Activated CD4-positive, alpha-beta memory T cell treated with anti-CD3 and anti-CD28 coated beads for 36 hours (primary cell): ENCODE measurements at regions of chr14 and their contacts with region 1.

Region 1: GRCh38 chr14:102819176-102819628 is 42.0 kb downstream of the TRAF3 start:
- DNase-seq: peak; percentile 92
- H3K4me3 Mint-ChIP-seq: peak overlapping the region; percentile 71
- H3K27ac Mint-ChIP-seq: peak overlapping the region; percentile 99
- H3K4me1 Mint-ChIP-seq: peaks cover 87% of the 10 kb centered on the region
- H3K27me3 Mint-ChIP-seq: no peaks in the 10 kb centered on the region

Region 2: DNA sequence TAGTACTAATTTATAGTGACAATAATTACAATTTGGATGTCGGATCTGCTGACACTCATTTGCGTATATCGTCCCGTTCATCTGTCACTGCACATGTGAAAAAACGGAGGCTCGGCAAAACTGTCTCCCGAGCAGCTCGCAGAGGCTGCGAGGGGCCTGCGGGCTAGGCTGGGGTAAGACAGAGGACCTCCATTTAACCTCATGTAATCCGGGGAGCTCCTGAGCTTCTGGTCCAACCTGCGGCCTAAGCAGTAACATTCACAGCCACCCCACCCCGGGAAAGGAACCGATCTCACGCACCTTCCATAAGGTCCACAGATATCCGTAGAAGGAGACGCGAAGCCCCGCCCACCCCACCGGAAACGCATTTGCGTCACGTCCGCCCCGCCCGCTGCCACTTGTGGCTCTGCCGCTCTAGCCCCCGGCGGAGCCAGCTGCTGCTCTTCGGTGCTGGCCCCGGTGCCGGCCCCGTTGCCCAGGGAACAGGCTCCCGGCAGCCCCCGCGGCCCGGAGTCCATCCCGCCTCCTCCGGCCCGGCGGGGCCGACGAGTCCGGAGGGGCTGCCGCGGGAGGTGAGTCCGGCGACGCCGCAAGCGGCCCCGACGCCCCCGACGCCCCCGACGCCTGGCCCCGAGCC is 456.5 kb before region 1 on chr14 and contains the starts of genes CINP and TECPR2:
- CTCF ChIA-PET with region 1: no interaction called
- POLR2A ChIA-PET with region 1: no interaction called
- intact Hi-C with region 1: loop called (anchors 5 kb)
- DNase-seq: peak; percentile 99
- H3K4me3 Mint-ChIP-seq: no peak within 1 kb of the TSS
- H3K27ac Mint-ChIP-seq: peak within 1 kb of the TSS; percentile 96
- H3K4me1 Mint-ChIP-seq: peaks cover 31% of the 10 kb centered on the region
- H3K27me3 Mint-ChIP-seq: no peaks in the 10 kb centered on the region
- total RNA-seq, gene CINP: 50.5 to 51.2 TPM
- total RNA-seq, gene TECPR2: 6.2 to 7.0 TPM

Region 3: DNA sequence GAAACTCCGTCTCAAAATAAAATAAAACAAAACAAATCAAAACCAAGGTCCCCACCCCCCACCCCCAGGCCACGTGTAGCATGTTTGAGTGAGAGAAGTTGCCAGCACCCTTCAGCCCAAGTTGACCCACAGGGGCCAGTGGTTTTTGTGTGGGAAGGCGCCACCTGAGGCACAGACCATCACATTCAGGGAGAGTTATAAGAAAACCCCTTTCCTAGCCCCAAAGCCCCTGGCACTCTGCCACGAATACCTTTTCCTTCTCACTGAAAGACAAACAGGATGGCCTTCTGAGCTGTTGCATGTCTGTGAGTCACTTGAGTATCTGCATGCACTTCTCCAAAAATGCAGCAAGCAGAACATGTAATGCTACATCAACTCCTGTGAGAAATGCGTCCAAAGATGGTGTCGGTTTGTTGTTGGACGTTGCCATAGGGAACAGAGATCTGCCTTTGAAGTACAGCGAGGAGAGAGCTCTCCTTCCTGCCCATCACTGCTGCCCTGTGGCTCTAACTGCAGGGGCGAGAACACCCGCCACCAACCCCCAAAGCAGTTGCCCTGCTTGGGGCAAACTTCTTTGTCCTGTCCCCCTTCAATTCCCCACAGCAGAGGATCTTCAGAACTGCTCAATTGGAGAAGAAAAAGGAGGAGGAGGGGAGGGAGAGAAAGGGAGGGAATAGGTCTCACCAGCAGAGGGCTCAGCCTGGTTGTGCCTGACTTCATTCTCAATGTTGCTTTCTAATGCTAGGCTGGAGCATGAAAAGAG is 44.6 kb before region 1 on chr14:
- CTCF ChIA-PET with region 1: interaction called, 8 read pairs
- POLR2A ChIA-PET with region 1: interaction called, 9 read pairs
- intact Hi-C with region 1: loop called (anchors 1 kb)
- DNase-seq: peak; percentile 74
- H3K4me3 Mint-ChIP-seq: peak overlapping the region; percentile 9
- H3K27ac Mint-ChIP-seq: peak overlapping the region; percentile 86
- H3K4me1 Mint-ChIP-seq: peaks cover 35% of the 10 kb centered on the region
- H3K27me3 Mint-ChIP-seq: no peaks in the 10 kb centered on the region

Region 4: DNA sequence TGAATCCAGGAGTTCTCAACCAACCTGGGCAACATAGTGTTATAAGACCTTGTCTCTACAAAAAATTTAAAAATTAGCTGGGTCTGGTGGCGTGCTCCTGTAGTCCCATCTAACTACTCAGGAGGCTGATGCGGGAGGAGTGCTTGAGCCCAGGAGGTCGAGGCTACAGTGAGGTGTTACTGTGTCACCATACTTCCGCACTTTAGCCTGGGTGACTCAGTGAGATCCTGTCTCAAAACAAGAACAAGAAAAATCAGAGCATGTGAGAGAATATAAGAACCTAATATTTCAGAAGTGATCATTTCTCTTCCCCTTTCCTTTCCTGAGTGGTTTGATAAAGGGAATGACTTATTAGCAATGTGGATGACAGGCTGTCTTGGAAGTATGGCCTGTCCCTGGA is 32.4 kb before region 1 on chr14:
- CTCF ChIA-PET with region 1: interaction called, 7 read pairs
- POLR2A ChIA-PET with region 1: interaction called, 9 read pairs
- intact Hi-C with region 1: loop called (anchors 1 kb)
- DNase-seq: peak; percentile 59
- H3K4me3 Mint-ChIP-seq: no peak overlapping the region
- H3K27ac Mint-ChIP-seq: peak overlapping the region; percentile 16
- H3K4me1 Mint-ChIP-seq: peaks cover 86% of the 10 kb centered on the region
- H3K27me3 Mint-ChIP-seq: no peaks in the 10 kb centered on the region

Region 5: GRCh38 chr14:102805371-102806246 is 13.6 kb before region 1 on chr14:
- CTCF ChIA-PET with region 1: interaction called, 13 read pairs
- POLR2A ChIA-PET with region 1: interaction called, 70 read pairs
- intact Hi-C with region 1: loop called (anchors 1 kb)
- DNase-seq: peak; percentile 79
- H3K4me3 Mint-ChIP-seq: peak overlapping the region; percentile 72
- H3K27ac Mint-ChIP-seq: peak overlapping the region; percentile 99
- H3K4me1 Mint-ChIP-seq: peaks cover 68% of the 10 kb centered on the region
- H3K27me3 Mint-ChIP-seq: no peaks in the 10 kb centered on the region

Region 6: GRCh38 chr14:102882226-102882906 is 63.2 kb after region 1 on chr14:
- CTCF ChIA-PET with region 1: no interaction called
- POLR2A ChIA-PET with region 1: no interaction called
- intact Hi-C with region 1: loop called (anchors 1 kb)
- DNase-seq: no peak
- H3K4me3 Mint-ChIP-seq: no peak overlapping the region
- H3K27ac Mint-ChIP-seq: peak overlapping the region; percentile 11
- H3K4me1 Mint-ChIP-seq: peaks cover 27% of the 10 kb centered on the region
- H3K27me3 Mint-ChIP-seq: no peaks in the 10 kb centered on the region